ENCODE measurements at regions of chr3 and their contacts with region 1.

Region 1: DNA sequence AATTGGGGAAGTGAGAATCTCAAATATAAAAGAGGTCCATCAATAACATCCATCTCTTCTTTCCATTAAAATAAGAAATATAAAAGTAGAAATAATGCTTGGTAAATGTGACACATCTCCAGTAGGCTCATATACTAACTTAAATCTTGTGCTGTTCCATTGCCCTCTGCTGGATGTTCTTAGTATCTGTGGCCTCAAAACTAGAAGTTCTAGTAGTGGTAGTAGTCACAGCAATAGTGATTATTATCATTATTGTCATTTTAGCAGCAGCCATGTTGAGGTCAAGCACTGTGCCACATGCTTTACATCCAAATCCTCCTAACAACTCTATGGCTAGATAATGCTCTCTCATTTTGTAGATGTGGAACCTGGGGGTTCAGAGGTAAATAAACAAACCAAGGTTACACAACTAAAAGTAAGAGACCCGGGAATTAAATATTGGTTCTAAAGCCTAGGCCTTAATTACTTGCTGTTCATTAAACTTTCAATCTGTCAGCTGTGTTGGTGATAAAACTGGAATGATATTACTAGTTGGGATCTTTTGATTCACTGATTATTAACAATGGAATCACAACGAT is 20.2 kb upstream of the BTLA start:
- DNase-seq: peak in 7 of 9 donors; percentile 41 to 74 (median 63)
- ATAC-seq: peak; percentile 94
- H3K4me3 ChIP-seq: no peak overlapping the region
- H3K4me3 Mint-ChIP-seq: no peak overlapping the region
- H3K27ac ChIP-seq: no peak overlapping the region
- H3K27ac Mint-ChIP-seq: peak overlapping the region in 3 of 9 donors; percentile 4 to 78 (median 25)
- H3K4me1 ChIP-seq: peaks cover 0 to under 1% of the 10 kb centered on the region in 2 donors
- H3K4me1 Mint-ChIP-seq: peaks cover 5 to 25% (median 19%) of the 10 kb centered on the region in 7 donors
- H3K27me3 ChIP-seq: no peaks in the 10 kb centered on the region
- H3K27me3 Mint-ChIP-seq: no peaks in the 10 kb centered on the region

Region 2: GRCh38 chr3:112111785-112112402 is 407.6 kb before region 1 on chr3:
- CTCF ChIA-PET with region 1: interaction called, 16 read pairs
- POLR2A ChIA-PET with region 1: no interaction called
- intact Hi-C with region 1: loop called (anchors 1 kb)
- DNase-seq: peak in 7 of 9 donors; percentile 52 to 75 (median 70)
- ATAC-seq: peak; percentile 96
- H3K4me3 ChIP-seq: no peak overlapping the region
- H3K4me3 Mint-ChIP-seq: peak overlapping the region in 1 of 10 donors; percentile 14
- H3K27ac ChIP-seq: no peak overlapping the region
- H3K27ac Mint-ChIP-seq: peak overlapping the region in 4 of 9 donors; percentile 28 to 48 (median 40)
- H3K4me1 ChIP-seq: no peaks in the 10 kb centered on the region
- H3K4me1 Mint-ChIP-seq: peaks cover 2 to 18% (median 9%) of the 10 kb centered on the region in 7 donors
- H3K27me3 ChIP-seq: no peaks in the 10 kb centered on the region
- H3K27me3 Mint-ChIP-seq: no peaks in the 10 kb centered on the region

Region 3: GRCh38 chr3:112293368-112294321 is 225.9 kb before region 1 on chr3 and contains the start of gene SLC9C1:
- CTCF ChIA-PET with region 1: interaction called, 31 read pairs
- POLR2A ChIA-PET with region 1: no interaction called
- intact Hi-C with region 1: loop called (anchors 1 kb)
- DNase-seq: peak in 7 of 9 donors; percentile 32 to 66 (median 49)
- ATAC-seq: peak; percentile 84
- H3K4me3 ChIP-seq: peak within 1 kb of the TSS; percentile 25
- H3K4me3 Mint-ChIP-seq: peak within 1 kb of the TSS; percentile 49 to 80 (median 70)
- H3K27ac ChIP-seq: no peak within 1 kb of the TSS
- H3K27ac Mint-ChIP-seq: peak within 1 kb of the TSS; percentile 4 to 83 (median 56)
- H3K4me1 ChIP-seq: no peaks in the 10 kb centered on the region
- H3K4me1 Mint-ChIP-seq: peaks cover 17 to 37% (median 27%) of the 10 kb centered on the region in 7 donors
- H3K27me3 ChIP-seq: no peaks in the 10 kb centered on the region
- H3K27me3 Mint-ChIP-seq: no peaks in the 10 kb centered on the region
- total RNA-seq, gene SLC9C1: not detected

Region 4: DNA sequence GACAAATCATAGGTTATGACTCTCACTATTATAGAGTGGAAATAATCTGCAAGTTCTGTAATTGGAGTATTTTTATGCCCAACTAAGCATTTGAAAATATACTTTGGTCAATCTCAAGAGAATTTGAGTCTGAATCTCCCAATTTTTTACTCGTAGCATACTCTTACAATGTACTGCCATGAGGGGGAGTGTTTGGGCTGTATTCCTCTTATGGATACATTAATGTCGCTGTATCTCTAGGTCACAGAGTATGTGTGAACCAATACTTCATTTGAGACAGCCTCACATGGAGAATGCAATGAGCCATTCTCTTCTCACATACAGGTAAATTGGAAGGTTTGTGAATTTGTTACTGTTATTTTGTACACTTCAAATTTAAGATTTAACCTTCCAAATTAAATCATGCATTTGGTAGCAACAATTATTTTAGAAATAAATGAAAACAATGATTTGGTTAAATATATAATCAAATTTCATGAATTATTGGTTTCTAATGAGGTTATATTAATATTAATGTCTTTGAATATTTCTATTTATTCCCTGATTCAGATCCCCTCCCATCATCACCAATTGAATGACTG is 192.1 kb before region 1 on chr3:
- CTCF ChIA-PET with region 1: interaction called, 24 read pairs
- POLR2A ChIA-PET with region 1: no interaction called
- intact Hi-C with region 1: loop called (anchors 1 kb)
- DNase-seq: peak in 7 of 9 donors; percentile 41 to 76 (median 66)
- ATAC-seq: peak; percentile 100
- H3K4me3 ChIP-seq: no peak overlapping the region
- H3K4me3 Mint-ChIP-seq: no peak overlapping the region
- H3K27ac ChIP-seq: no peak overlapping the region
- H3K27ac Mint-ChIP-seq: no peak overlapping the region
- H3K4me1 ChIP-seq: no peaks in the 10 kb centered on the region
- H3K4me1 Mint-ChIP-seq: peaks cover 0 to 8% (median 6%) of the 10 kb centered on the region in 7 donors
- H3K27me3 ChIP-seq: no peaks in the 10 kb centered on the region
- H3K27me3 Mint-ChIP-seq: peaks cover 0 to 20% (median 5%) of the 10 kb centered on the region in 5 donors

Region 5: DNA sequence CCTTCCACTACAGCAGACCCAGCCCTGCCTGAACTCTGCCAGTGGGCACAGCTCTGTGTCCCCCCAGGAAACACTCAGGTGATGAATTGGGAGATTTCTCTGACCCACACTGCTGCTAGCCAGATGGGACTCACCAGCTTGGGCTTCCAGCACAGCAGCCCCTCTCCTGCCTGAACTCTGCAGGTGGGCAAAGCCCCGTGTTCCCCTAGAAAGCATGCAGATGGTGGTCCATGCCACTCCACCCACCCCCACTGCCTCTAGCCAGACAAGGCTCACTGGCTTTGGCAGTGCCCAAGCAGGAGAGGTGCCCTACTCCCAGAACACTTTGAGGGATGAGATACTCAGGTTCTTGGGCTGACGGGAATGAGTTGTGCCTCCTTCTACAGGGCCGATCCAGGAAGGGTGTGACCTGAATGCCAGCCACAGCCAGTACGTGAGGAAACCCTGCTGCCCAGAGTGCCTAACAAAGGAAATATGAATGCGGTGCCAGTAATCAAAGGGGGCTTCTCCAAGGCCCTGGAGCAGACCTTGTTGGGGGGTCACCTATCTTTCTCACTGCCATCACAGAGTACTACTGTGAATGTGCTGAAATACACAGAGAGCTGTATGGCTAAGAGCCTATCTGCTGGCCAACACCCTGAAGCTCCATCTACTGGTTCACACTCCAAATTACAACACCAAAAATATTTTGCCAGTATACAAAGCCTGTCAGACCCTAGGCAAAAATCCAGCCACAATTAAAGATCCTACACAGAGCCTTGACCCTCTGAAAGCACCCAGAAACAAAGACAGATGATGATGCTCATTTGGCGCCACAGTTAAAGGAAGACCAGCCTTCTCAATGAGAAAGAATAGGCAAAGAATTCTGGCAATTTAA is 82.1 kb before region 1 on chr3:
- CTCF ChIA-PET with region 1: interaction called, 3 read pairs
- POLR2A ChIA-PET with region 1: no interaction called
- intact Hi-C with region 1: loop called (anchors 1 to 5 kb)
- DNase-seq: peak in 4 of 9 donors; percentile 8 to 23 (median 14)
- ATAC-seq: peak; percentile 83
- H3K4me3 ChIP-seq: peak overlapping the region; percentile 9
- H3K4me3 Mint-ChIP-seq: no peak overlapping the region
- H3K27ac ChIP-seq: no peak overlapping the region
- H3K27ac Mint-ChIP-seq: peak overlapping the region in 2 of 9 donors; percentile 35 to 53
- H3K4me1 ChIP-seq: peaks cover 0 to 7% of the 10 kb centered on the region in 2 donors
- H3K4me1 Mint-ChIP-seq: peaks cover 5 to 29% (median 16%) of the 10 kb centered on the region in 7 donors
- H3K27me3 ChIP-seq: no peaks in the 10 kb centered on the region
- H3K27me3 Mint-ChIP-seq: no peaks in the 10 kb centered on the region

Region 6: GRCh38 chr3:112498914-112499711 is 20.4 kb before region 1 on chr3 and contains the start of gene BTLA:
- CTCF ChIA-PET with region 1: interaction called, 5 read pairs
- POLR2A ChIA-PET with region 1: interaction called, 3 read pairs
- intact Hi-C with region 1: loop called (anchors 1 to 2 kb)
- DNase-seq: peak in 7 of 9 donors; percentile 45 to 65 (median 50)
- ATAC-seq: peak; percentile 81
- H3K4me3 ChIP-seq: peak within 1 kb of the TSS; percentile 80
- H3K4me3 Mint-ChIP-seq: peak within 1 kb of the TSS; percentile 85 to 100 (median 97)
- H3K27ac ChIP-seq: peak within 1 kb of the TSS; percentile 68
- H3K27ac Mint-ChIP-seq: peak within 1 kb of the TSS; percentile 88 to 99 (median 94)
- H3K4me1 ChIP-seq: peaks cover 14 to 26% of the 10 kb centered on the region in 2 donors
- H3K4me1 Mint-ChIP-seq: peaks cover 34 to 63% (median 55%) of the 10 kb centered on the region in 7 donors
- H3K27me3 ChIP-seq: no peaks in the 10 kb centered on the region
- H3K27me3 Mint-ChIP-seq: no peaks in the 10 kb centered on the region
- total RNA-seq, gene BTLA: 15.6 to 29.5 (median 26.1) TPM